CD4-positive, alpha-beta T cell (primary cell): ENCODE measurements at regions of chr17 and their contacts with region 1.

Region 1: GRCh38 chr17:31508288-31509094 is 117.0 kb downstream of the RAB11FIP4 start:
- DNase-seq: peak; percentile 50 to 89 (median 64)
- ATAC-seq: peak; percentile 93
- H3K4me3 ChIP-seq: peak overlapping the region; percentile 59
- H3K4me3 Mint-ChIP-seq: peak overlapping the region; percentile 89
- H3K27ac ChIP-seq: peak overlapping the region; percentile 78 to 94
- H3K27ac Mint-ChIP-seq: peak overlapping the region; percentile 89
- H3K4me1 ChIP-seq: peaks cover 69% of the 10 kb centered on the region
- H3K4me1 Mint-ChIP-seq: peaks cover 62% of the 10 kb centered on the region
- H3K27me3 ChIP-seq: no peaks in the 10 kb centered on the region
- H3K27me3 Mint-ChIP-seq: no peaks in the 10 kb centered on the region
- CTCF ChIP-seq: peak; percentile 38

Region 2: DNA sequence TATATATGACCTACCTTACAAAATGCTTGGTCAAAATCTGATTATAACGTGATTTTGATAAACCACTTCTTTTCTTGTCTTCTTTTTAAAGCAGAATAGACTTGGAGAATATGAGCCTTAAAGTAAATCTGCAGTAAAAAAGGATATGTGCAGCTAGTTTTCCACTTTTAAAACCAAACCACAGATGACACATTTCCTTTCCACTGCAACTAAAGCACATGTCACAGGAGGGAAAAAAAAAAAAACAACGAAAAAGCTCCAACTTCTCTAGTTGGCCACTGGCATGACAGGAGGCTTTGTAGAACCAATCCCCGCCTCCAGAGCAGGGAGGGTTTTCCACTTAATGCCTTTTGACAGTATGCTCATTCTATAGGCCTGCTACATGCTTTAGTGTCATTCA is 187.0 kb before region 1 on chr17 and contains the start of gene EVI2A:
- CTCF ChIA-PET with region 1: no interaction called
- POLR2A ChIA-PET with region 1: interaction called, 8 read pairs
- intact Hi-C with region 1: loop called in 1 of 2 experiments (anchors 5 kb)
- DNase-seq: peak; percentile 52 to 95 (median 65)
- ATAC-seq: peak; percentile 85
- H3K4me3 ChIP-seq: peak within 1 kb of the TSS; percentile 82
- H3K4me3 Mint-ChIP-seq: peak within 1 kb of the TSS; percentile 91
- H3K27ac ChIP-seq: peak within 1 kb of the TSS; percentile 83 to 87
- H3K27ac Mint-ChIP-seq: peak within 1 kb of the TSS; percentile 93
- H3K4me1 ChIP-seq: peaks cover 7% of the 10 kb centered on the region
- H3K4me1 Mint-ChIP-seq: peaks cover 45% of the 10 kb centered on the region
- H3K27me3 ChIP-seq: no peaks in the 10 kb centered on the region
- H3K27me3 Mint-ChIP-seq: no peaks in the 10 kb centered on the region
- CTCF ChIP-seq: no peak
- total RNA-seq, gene EVI2A: 37.8 to 38.4 TPM

Region 3: GRCh38 chr17:31388770-31389661 is 119.5 kb before region 1 on chr17:
- CTCF ChIA-PET with region 1: interaction called, 3 read pairs
- POLR2A ChIA-PET with region 1: no interaction called
- intact Hi-C with region 1: loop called in 1 of 2 experiments (anchors 5 kb)
- DNase-seq: peak in 12 of 14 experiments; percentile 13 to 68 (median 42)
- ATAC-seq: peak; percentile 48
- H3K4me3 ChIP-seq: no peak overlapping the region
- H3K4me3 Mint-ChIP-seq: no peak overlapping the region
- H3K27ac ChIP-seq: no peak overlapping the region
- H3K27ac Mint-ChIP-seq: no peak overlapping the region
- H3K4me1 ChIP-seq: peaks cover 16% of the 10 kb centered on the region
- H3K4me1 Mint-ChIP-seq: peaks cover 6% of the 10 kb centered on the region
- H3K27me3 ChIP-seq: peaks cover 25 to 28% of the 10 kb centered on the region in 2 experiments
- H3K27me3 Mint-ChIP-seq: peaks cover 39% of the 10 kb centered on the region
- CTCF ChIP-seq: peak; percentile 65

Region 4: GRCh38 chr17:31433091-31433790 is 75.2 kb before region 1 on chr17:
- CTCF ChIA-PET with region 1: interaction called, 7 read pairs
- POLR2A ChIA-PET with region 1: interaction called, 7 read pairs
- intact Hi-C with region 1: loop called in 1 of 2 experiments (anchors 5 kb)
- DNase-seq: peak; percentile 19 to 76 (median 34)
- ATAC-seq: peak; percentile 92
- H3K4me3 ChIP-seq: no peak overlapping the region
- H3K4me3 Mint-ChIP-seq: peak overlapping the region; percentile 3
- H3K27ac ChIP-seq: no peak overlapping the region
- H3K27ac Mint-ChIP-seq: peak overlapping the region; percentile 11
- H3K4me1 ChIP-seq: peaks cover 30% of the 10 kb centered on the region
- H3K4me1 Mint-ChIP-seq: peaks cover 13% of the 10 kb centered on the region
- H3K27me3 ChIP-seq: peaks cover 0 to 5% of the 10 kb centered on the region in 2 experiments
- H3K27me3 Mint-ChIP-seq: peaks cover 11% of the 10 kb centered on the region
- CTCF ChIP-seq: no peak

Region 5: DNA sequence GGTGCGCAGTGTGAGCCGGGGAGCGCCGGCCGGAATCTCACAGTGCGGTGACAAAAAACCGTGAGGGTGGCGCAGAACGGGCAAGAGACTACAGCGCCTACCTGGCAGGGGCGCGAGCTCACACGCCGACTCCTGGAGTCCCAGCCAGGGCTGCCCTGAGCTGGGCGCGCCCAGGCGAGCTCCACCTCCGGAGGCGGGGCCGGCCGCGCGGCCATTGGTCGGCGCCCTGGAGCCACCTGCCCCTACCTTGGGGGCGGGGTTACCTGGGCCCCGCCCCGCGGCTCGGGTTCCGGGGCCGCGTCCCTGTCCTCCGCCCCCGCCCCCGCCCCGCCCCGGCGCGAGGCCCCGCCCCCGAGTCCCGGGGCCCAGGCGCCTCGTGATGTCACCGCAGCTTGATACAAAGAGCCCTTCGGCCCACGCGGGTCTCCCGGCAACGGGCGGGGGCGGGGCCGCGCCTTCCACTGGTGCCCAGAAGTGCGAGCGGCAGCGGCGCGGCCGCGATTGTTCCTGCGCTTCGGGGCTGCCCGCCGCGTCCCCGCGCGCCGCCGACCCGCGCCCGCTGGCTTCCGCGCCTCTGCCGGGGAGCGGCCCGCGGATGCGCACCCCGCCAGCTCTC is 20.7 kb before region 1 on chr17:
- CTCF ChIA-PET with region 1: interaction called, 42 read pairs
- POLR2A ChIA-PET with region 1: interaction called, 141 read pairs
- intact Hi-C with region 1: loop called (anchors 1 to 2 kb)
- DNase-seq: peak; percentile 89 to 99 (median 96)
- ATAC-seq: peak; percentile 91
- H3K4me3 ChIP-seq: peak overlapping the region; percentile 92
- H3K4me3 Mint-ChIP-seq: peak overlapping the region; percentile 92
- H3K27ac ChIP-seq: peak overlapping the region; percentile 63 to 77
- H3K27ac Mint-ChIP-seq: peak overlapping the region; percentile 86
- H3K4me1 ChIP-seq: peaks cover 53% of the 10 kb centered on the region
- H3K4me1 Mint-ChIP-seq: peaks cover 53% of the 10 kb centered on the region
- H3K27me3 ChIP-seq: no peaks in the 10 kb centered on the region
- H3K27me3 Mint-ChIP-seq: no peaks in the 10 kb centered on the region
- CTCF ChIP-seq: peak; percentile 10

Region 6: DNA sequence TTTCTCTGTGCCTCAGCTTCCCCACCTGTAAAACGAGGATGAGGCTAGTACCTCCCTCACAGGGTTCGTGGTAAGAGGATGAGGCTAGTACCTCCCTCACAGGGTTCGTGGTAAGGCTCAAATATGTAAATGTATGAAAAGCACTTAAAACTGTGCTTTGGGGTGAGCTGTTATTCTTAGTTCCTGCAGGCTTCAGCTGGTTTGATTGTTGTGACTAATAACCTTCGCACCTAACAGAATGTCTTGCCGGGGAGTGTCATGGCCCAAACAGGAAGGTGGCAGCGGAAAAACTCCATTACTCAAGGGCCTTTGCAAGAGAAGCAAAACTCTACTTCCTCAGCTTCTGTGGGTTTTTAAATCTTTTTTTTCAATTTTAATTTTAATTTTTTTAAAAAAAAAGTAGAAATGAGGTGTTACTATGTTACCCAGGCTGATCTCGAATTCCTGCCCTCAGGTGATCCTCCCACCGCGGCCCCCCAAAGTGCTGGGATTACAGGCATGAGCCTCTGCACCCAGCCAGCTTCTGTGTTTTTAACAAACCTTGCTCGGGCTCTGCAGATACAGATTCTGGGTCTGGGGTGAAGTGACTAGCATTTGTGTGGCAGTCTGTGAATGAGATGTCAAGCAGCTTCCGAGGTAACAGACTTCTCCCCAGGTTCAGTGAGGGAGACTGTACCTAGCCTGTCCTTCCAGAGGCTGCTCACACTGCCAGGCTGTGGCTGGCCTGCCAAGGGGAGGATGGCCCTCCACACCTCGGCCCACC is 14.1 kb before region 1 on chr17:
- CTCF ChIA-PET with region 1: interaction called, 42 read pairs
- POLR2A ChIA-PET with region 1: interaction called, 141 read pairs
- intact Hi-C with region 1: loop called in 1 of 2 experiments (anchors 2 kb)
- DNase-seq: peak in 13 of 14 experiments; percentile 45 to 90 (median 59)
- ATAC-seq: peak; percentile 85
- H3K4me3 ChIP-seq: peak overlapping the region; percentile 19
- H3K4me3 Mint-ChIP-seq: peak overlapping the region; percentile 96
- H3K27ac ChIP-seq: peak overlapping the region; percentile 81 to 90
- H3K27ac Mint-ChIP-seq: peak overlapping the region; percentile 96
- H3K4me1 ChIP-seq: peaks cover 92% of the 10 kb centered on the region
- H3K4me1 Mint-ChIP-seq: peaks cover 85% of the 10 kb centered on the region
- H3K27me3 ChIP-seq: no peaks in the 10 kb centered on the region
- H3K27me3 Mint-ChIP-seq: no peaks in the 10 kb centered on the region
- CTCF ChIP-seq: no peak